Upper lobe of right lung (tissue), 1 donor: ENCODE measurements at regions of chr13 and their contacts with region 1.

Region 1: DNA sequence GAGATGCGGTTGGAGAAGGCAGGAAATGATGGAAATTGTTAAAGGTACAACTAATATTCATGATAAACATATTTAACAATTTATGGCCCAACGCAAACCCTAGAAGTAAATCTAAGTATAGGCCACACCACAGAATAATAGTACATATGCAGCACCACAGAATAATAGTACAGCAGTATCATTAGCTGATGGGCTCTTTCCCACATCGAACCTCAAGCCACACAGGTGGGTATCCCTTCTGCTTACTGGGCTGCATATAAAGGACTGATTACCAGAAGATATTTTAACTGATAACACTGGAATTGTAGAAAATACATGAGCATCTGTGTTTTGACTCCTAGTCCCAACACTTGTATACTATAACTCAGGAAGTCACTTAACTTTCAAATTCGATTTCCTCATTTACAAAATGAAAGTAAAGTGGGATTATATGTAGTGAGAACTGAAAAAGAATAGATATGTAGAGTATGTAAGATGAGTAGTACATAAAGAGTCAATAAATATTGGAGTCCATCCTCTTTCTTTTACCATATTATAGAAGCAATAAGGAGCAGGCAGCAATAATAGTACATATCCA is 91.5 kb downstream of the TSC22D1 start:
- DNase-seq: no peak
- ATAC-seq: no peak
- H3K4me3 ChIP-seq: no peak overlapping the region
- H3K27ac ChIP-seq: no peak overlapping the region
- H3K4me1 ChIP-seq: no peaks in the 10 kb centered on the region
- H3K27me3 ChIP-seq: no peaks in the 10 kb centered on the region
- CTCF ChIP-seq: no peak

Region 2: DNA sequence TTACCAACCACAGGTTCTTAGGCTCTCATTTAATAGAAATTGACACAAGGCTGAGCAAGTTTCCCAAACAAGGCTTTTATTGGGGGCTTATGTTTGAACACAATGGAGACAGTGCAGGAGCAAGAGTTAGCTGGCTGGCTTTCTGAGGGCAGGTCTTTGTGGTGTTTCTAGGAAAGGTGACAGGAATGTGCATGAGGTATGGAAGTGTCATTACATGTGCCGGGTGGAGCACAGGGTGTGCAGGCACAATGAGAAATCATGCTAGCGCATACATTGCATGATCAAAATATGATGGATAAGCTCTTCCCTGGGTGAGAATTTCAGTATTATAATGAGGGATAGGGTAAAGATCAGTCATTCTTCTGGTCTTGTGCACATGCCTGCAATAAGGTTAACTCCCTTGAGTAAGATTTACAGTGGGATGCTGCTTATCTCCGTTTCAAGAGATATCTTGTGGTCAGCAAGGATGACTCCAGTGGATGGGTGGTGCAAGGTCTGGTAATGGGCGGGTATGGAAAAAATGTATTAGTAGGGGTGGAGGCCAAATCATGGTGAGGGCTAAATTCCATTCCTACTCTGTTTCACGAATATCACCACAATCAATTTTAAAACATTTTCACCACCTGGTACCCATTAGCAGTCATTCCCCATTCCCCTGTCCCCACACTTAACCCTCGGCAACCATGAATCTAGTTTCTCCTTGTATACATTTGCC is 645.9 kb before region 1 on chr13:
- intact Hi-C with region 1: no loop called
- DNase-seq: no peak
- ATAC-seq: no peak
- H3K4me3 ChIP-seq: no peak overlapping the region
- H3K27ac ChIP-seq: no peak overlapping the region
- H3K4me1 ChIP-seq: no peaks in the 10 kb centered on the region
- H3K27me3 ChIP-seq: no peaks in the 10 kb centered on the region
- CTCF ChIP-seq: no peak

Region 3: DNA sequence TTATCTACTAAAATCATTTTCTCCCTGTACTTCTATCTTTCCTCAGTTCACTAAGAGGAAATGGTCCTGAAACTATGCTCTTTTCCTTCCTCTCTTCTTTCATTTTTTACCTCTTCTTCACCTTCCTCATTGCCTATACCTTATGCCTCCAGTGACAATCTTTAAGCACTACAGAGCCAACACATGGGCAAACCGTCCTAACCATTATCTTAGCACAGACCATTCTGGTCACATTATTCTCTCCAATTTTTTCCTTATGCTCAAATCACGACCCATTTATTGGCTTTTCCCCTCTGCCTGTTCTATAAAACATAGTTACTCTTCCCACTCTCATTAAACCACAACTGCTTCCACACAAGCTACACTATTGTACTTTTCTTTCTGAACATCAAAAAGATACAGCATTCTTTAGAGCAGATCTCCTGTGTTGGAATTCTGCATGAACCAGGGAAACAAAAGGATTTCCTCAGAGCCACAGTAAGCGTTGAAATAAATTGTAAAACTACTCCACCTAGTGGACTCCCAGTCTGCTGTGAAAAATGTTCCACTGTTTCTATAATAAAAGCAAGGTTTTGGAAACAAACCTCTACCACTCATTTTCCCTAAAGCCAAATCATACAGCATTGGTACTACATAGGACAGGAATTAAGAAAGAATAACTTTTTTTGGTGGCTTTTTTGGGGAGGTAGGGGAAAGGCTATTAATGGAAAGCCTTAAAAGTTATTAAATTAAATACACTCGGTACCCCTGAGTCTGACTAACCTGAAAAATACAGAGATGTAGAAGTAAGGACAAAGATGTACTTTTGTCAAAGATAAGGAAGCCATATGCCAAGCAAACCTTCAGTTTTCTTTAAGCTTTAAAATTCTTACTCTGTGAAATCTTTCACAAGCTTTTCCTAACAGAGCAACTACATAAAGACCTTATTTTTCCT is 485.2 kb after region 1 on chr13:
- intact Hi-C with region 1: loop called (anchors 10 kb)
- DNase-seq: no peak
- ATAC-seq: peak; percentile 72
- H3K4me3 ChIP-seq: no peak overlapping the region
- H3K27ac ChIP-seq: no peak overlapping the region
- H3K4me1 ChIP-seq: peaks cover 10% of the 10 kb centered on the region
- H3K27me3 ChIP-seq: no peaks in the 10 kb centered on the region
- CTCF ChIP-seq: peak; percentile 80